Aorta (tissue), 5 donors: ENCODE measurements at regions of chr7 and their contacts with region 1.

Region 1: DNA sequence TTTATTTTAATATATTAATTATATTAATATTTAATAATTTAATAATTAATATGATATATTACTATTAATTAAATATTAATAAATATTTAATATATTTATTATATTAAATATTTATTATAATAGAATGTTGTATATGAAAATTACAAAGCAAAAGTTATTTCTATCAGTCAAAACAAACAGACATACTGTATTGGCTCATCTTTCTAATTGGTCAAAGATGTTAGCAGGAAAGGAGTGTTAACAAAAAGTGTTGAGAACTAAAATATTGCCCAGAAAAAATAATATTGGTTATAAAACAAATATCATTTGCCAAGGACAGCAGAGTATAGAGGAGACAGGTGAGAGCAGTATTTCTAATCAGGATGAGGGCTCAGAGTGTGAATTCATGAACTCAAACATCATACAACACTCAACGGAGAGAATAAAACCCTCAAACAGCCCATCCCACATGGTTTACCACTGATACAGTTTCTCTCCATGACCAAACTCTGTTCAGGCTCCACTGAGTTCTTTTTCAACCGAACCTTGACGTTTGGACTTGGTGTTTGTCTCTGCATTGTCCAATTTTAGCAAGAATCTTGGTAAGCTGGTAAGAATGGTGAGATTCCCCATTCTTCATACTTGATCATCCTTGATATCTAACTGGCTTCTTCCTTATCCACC is 58.0 kb downstream of the TSPAN12 start:
- DNase-seq: no peak
- ATAC-seq: no peak
- H3K4me3 ChIP-seq: no peak overlapping the region
- H3K27ac ChIP-seq: no peak overlapping the region
- H3K4me1 ChIP-seq: no peaks in the 10 kb centered on the region
- H3K27me3 ChIP-seq: no peaks in the 10 kb centered on the region

Region 2: GRCh38 chr7:120941064-120941463 is 141.1 kb after region 1 on chr7:
- intact Hi-C with region 1: loop called (anchors 5 kb)
- DNase-seq: no peak
- ATAC-seq: no peak
- H3K4me3 ChIP-seq: no peak overlapping the region
- H3K27ac ChIP-seq: no peak overlapping the region
- H3K4me1 ChIP-seq: no peaks in the 10 kb centered on the region
- H3K27me3 ChIP-seq: no peaks in the 10 kb centered on the region

Region 3: GRCh38 chr7:120950539-120951308 is 150.8 kb after region 1 on chr7 and contains the start of gene ING3:
- intact Hi-C with region 1: loop called in 1 of 2 experiments (anchors 5 kb)
- DNase-seq: peak; percentile 98
- ATAC-seq: peak; percentile 99
- H3K4me3 ChIP-seq: peak within 1 kb of the TSS; percentile 85 to 94
- H3K27ac ChIP-seq: peak within 1 kb of the TSS; percentile 80 to 99
- H3K4me1 ChIP-seq: peaks cover 0 to 3% of the 10 kb centered on the region in 2 donors
- H3K27me3 ChIP-seq: no peaks in the 10 kb centered on the region
- total RNA-seq, gene ING3: 15.9 to 16.0 TPM

Region 4: GRCh38 chr7:121000081-121000983 is 200.4 kb after region 1 on chr7:
- intact Hi-C with region 1: no loop called
- DNase-seq: no peak
- ATAC-seq: peak; percentile 67
- H3K4me3 ChIP-seq: peak overlapping the region; percentile 8 to 64
- H3K27ac ChIP-seq: peak overlapping the region; percentile 82 to 95
- H3K4me1 ChIP-seq: peaks cover 9 to 23% of the 10 kb centered on the region in 2 donors
- H3K27me3 ChIP-seq: no peaks in the 10 kb centered on the region

Region 5: DNA sequence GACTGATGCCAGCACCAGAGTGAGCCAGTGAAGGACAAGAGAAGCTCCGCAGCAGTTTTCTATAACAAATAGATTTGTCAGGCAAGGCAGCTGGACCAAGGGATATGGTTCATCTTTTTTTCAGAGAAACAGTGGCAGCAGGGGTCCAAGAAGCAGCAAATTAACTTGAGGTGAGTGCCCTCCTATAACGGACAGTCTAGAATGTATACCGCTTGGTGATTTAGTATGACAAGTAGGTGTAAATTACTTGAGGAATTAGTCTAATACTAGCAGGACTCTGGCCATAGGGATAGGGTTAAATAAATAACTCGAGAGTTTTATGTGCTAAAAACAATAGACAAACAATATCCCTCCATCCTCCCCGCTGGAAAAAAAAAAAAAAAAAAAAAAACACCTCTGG is 375.9 kb after region 1 on chr7:
- intact Hi-C with region 1: no loop called
- DNase-seq: no peak
- ATAC-seq: no peak
- H3K4me3 ChIP-seq: no peak overlapping the region
- H3K27ac ChIP-seq: no peak overlapping the region
- H3K4me1 ChIP-seq: peaks cover 4 to 5% of the 10 kb centered on the region in 2 donors
- H3K27me3 ChIP-seq: no peaks in the 10 kb centered on the region

Region 6: GRCh38 chr7:121872831-121873288 is 1072.9 kb after region 1 on chr7 and contains the start of gene PTPRZ1:
- intact Hi-C with region 1: no loop called
- DNase-seq: peak; percentile 35 to 76
- ATAC-seq: peak; percentile 73
- H3K4me3 ChIP-seq: peak within 1 kb of the TSS; percentile 40 to 93
- H3K27ac ChIP-seq: no peak within 1 kb of the TSS
- H3K4me1 ChIP-seq: no peaks in the 10 kb centered on the region
- H3K27me3 ChIP-seq: no peaks in the 10 kb centered on the region
- total RNA-seq, gene PTPRZ1: 2.2 to 2.7 TPM